Activated CD4-positive, alpha-beta T cell treated with anti-CD3 and anti-CD28 coated beads, Interleukin-2, amount 10 ng/mL, durations not matched to agents 24 days and 14 days (primary cell): ENCODE measurements at regions of chr4 and their contacts with region 1.

Region 1: DNA sequence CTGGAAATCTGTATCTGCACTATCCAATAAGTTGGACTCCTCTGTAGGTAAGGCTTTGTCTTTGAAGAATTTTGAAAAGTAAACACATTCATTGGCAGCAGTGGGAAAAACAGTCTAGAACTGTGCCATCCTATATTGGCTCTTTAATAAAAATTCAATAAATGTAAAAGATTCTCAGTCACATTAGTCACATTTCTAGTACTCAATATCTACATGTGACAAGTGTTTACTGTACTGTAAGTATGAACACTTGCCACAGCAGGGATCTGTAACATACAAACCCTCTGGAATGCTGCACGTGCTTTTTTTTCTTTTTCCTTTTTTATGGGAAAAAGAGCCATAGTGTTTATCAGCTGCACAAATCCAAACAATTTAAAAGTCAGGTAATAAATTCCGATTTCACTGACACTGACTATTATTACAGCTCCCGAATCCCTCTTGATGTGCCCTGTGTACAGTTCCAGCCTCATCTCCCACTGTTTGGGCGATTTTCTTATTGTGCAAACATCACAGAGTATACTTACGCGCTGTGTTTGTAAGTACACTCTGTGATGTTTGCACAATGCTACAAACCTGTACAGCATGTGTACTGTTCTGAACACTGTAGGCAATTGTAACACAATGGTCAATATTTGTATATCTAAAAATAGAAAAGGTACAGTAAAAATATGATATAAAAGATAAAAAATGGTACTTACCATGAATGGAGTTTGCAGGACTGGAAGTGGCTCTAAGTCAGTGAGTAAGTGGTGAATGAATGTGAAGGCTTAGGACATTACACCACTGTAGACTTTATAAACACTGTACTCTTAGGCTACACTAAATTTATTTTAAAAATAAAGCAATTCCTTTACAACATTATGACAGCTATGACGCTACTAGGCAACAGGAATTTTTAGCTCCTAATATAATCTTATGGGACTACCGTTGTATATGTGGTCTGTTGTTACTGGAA is 8.7 kb downstream of the PYURF start:
- DNase-seq: no peak
- H3K4me3 Mint-ChIP-seq: no peak overlapping the region
- H3K27ac Mint-ChIP-seq: no peak overlapping the region
- H3K4me1 Mint-ChIP-seq: peaks cover 3% of the 10 kb centered on the region
- H3K27me3 Mint-ChIP-seq: peaks cover 2% of the 10 kb centered on the region

Region 2: DNA sequence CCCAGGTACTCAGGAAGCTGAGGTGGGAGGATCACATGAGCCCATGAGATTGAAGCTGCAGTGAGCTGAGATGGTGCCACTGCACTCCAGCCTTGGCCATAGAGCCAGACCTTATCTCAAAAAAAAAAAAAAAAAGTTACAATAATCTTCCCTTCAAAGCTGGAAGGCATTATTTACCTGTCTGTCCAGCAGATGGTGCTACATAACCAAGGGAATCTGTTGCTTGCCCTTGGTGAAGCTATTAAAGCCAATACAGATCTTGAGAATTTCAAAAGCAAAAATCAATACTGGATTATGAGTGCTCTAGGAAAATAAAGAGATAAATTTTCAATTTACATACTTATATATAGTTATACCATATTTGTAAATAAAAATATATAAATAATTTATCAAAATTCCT is 481.5 kb before region 1 on chr4:
- intact Hi-C with region 1: loop called (anchors 5 kb)
- DNase-seq: peak; percentile 84
- H3K4me3 Mint-ChIP-seq: no peak overlapping the region
- H3K27ac Mint-ChIP-seq: no peak overlapping the region
- H3K4me1 Mint-ChIP-seq: peaks cover 5% of the 10 kb centered on the region
- H3K27me3 Mint-ChIP-seq: no peaks in the 10 kb centered on the region

Region 3: DNA sequence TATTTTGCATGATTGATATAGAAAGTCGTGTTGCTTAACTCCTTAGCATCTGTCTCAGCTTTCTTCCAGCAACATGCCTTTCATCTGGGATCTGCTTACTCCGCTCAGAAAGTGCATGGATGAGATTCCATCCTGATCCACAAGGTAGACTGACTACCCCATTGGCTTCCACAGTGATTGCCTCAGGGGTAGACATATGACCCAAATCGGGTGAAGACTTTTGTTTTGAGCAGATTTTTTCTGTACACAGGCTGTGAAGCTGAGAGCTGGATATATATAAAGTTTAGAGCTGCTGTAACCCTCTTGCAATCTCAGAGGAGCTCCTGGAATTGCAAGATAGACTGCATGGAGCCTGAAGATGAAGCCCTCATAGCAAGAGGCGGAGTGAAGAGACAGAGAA is 144.9 kb before region 1 on chr4:
- intact Hi-C with region 1: loop called (anchors 1 kb)
- DNase-seq: no peak
- H3K4me3 Mint-ChIP-seq: no peak overlapping the region
- H3K27ac Mint-ChIP-seq: no peak overlapping the region
- H3K4me1 Mint-ChIP-seq: peaks cover 9% of the 10 kb centered on the region
- H3K27me3 Mint-ChIP-seq: no peaks in the 10 kb centered on the region